ENCODE measurements at regions of chr17 and their contacts with region 1.

Region 1: GRCh38 chr17:1724506-1725362 is at the start of gene WDR81:
- DNase-seq: peak; percentile 79 to 84 (median 81)
- H3K4me3 ChIP-seq: peak within 1 kb of the TSS; percentile 74 to 90 (median 80)
- H3K4me3 Mint-ChIP-seq: peak within 1 kb of the TSS; percentile 75 to 90
- H3K27ac ChIP-seq: peak within 1 kb of the TSS; percentile 73 to 85
- H3K27ac Mint-ChIP-seq: peak within 1 kb of the TSS; percentile 79 to 89 (median 85)
- H3K4me1 ChIP-seq: peaks cover 34 to 43% of the 10 kb centered on the region in 2 donors
- H3K4me1 Mint-ChIP-seq: peaks cover 39% of the 10 kb centered on the region
- H3K27me3 ChIP-seq: no peaks in the 10 kb centered on the region
- H3K27me3 Mint-ChIP-seq: peaks cover 0 to 2% (median 0%) of the 10 kb centered on the region in 3 donors
- CTCF ChIP-seq: peak; percentile 39
- polyA plus RNA-seq, gene WDR81: 6.2 to 45.4 (median 8.8) TPM

Region 2: DNA sequence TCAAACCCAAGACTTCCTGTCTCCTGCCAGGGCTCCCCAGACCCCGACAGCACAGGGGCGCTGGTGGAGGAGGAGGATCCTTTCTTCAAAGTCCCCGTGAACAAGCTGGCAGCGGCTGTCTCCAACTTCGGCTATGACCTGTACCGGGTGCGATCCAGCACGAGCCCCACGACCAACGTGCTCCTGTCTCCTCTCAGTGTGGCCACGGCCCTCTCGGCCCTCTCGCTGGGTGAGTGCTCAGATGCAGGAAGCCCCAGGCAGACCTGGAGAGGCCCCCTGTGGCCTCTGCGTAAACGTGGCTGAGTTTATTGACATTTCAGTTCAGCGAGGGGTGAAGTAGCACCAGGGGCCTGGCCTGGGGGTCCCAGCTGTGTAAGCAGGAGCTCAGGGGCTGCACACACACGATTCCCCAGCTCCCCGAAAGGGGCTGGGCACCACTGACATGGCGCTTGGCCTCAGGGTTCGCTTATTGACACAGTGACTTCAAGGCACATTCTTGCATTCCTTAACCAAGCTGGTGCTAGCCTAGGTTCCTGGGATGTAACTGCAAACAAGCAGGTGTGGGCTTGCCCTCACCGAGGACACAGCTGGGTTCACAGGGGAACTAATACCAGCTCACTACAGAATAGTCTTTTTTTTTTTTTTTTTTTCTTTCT is 45.2 kb after region 1 on chr17:
- intact Hi-C with region 1: no loop called
- DNase-seq: no peak
- H3K4me3 ChIP-seq: no peak overlapping the region
- H3K4me3 Mint-ChIP-seq: no peak overlapping the region
- H3K27ac ChIP-seq: no peak overlapping the region
- H3K27ac Mint-ChIP-seq: no peak overlapping the region
- H3K4me1 ChIP-seq: peaks cover 13 to 14% of the 10 kb centered on the region in 2 donors
- H3K4me1 Mint-ChIP-seq: peaks cover 13% of the 10 kb centered on the region
- H3K27me3 ChIP-seq: no peaks in the 10 kb centered on the region
- H3K27me3 Mint-ChIP-seq: peaks cover 0 to 6% (median 2%) of the 10 kb centered on the region in 3 donors
- CTCF ChIP-seq: no peak

Region 3: GRCh38 chr17:1783834-1784611 is 59.3 kb after region 1 on chr17:
- intact Hi-C with region 1: loop called (anchors 2 to 5 kb)
- DNase-seq: peak; percentile 84 to 86 (median 84)
- H3K4me3 ChIP-seq: peak overlapping the region; percentile 12 to 58 (median 15)
- H3K4me3 Mint-ChIP-seq: peak overlapping the region; percentile 71 to 85
- H3K27ac ChIP-seq: peak overlapping the region; percentile 93 to 97
- H3K27ac Mint-ChIP-seq: peak overlapping the region; percentile 97 to 99 (median 98)
- H3K4me1 ChIP-seq: peaks cover 27 to 29% of the 10 kb centered on the region in 2 donors
- H3K4me1 Mint-ChIP-seq: peaks cover 30% of the 10 kb centered on the region
- H3K27me3 ChIP-seq: no peaks in the 10 kb centered on the region
- H3K27me3 Mint-ChIP-seq: peaks cover 0 to 5% (median 1%) of the 10 kb centered on the region in 3 donors
- CTCF ChIP-seq: peak; percentile 76

Region 4: DNA sequence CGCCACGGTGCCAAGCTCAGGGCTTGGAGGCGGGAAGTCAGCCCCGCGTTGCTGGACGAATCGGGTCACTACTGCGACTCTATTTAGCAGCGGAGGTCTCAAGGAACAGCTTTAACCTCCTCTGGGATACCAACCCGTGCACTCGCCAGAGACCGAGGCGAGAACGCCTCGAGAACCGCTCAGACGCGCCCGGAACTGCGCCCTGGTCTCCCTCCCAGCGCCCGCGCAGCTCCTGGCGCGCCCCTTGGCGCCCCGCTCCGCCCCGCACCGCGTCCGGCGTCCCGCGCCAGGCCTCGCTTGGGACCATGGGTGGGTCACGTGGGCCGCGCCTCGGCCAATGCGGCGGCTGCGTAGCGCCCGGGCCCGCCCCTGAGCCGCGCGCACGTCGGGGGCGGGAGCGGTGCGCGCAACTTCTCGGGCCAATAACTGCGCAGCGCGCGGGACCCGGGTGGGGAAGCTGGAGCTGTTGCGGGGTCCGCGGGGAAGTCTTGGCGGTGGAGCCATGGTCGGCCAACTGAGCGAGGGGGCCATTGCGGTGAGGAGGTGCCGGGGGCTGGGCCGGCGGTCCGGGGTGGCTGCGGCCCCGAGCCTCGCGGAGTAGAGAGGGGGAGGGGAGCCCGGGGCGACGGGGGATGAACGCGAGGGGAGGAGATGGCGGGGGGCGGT is 105.0 kb after region 1 on chr17 and contains the starts of genes RPA1 and SMYD4:
- intact Hi-C with region 1: loop called (anchors 5 to 10 kb)
- DNase-seq: peak; percentile 73 to 84 (median 78)
- H3K4me3 ChIP-seq: peak within 1 kb of the TSS; percentile 70 to 97 (median 97)
- H3K4me3 Mint-ChIP-seq: peak within 1 kb of the TSS; percentile 80 to 95
- H3K27ac ChIP-seq: peak within 1 kb of the TSS in 1 of 2 donors; percentile 81
- H3K27ac Mint-ChIP-seq: peak within 1 kb of the TSS; percentile 66 to 94 (median 88)
- H3K4me1 ChIP-seq: peaks cover 22 to 23% of the 10 kb centered on the region in 2 donors
- H3K4me1 Mint-ChIP-seq: peaks cover 36% of the 10 kb centered on the region
- H3K27me3 ChIP-seq: no peaks in the 10 kb centered on the region
- H3K27me3 Mint-ChIP-seq: peaks cover 0 to 2% (median 0%) of the 10 kb centered on the region in 3 donors
- CTCF ChIP-seq: no peak
- polyA plus RNA-seq, gene RPA1: 18.5 to 27.4 (median 23.8) TPM
- polyA plus RNA-seq, gene SMYD4: 3.2 to 7.6 (median 6.1) TPM

Measured in CD14-positive monocyte (primary cell).